Heart left ventricle (tissue), 16 donors: ENCODE measurements at regions of chr18 and their contacts with region 1.

Region 1: GRCh38 chr18:48777026-48777743 is 173.6 kb downstream of the SMAD7 start:
- DNase-seq: peak; percentile 62 to 84 (median 69)
- ATAC-seq: peak in 1 of 4 donors; percentile 15
- H3K4me3 ChIP-seq: no peak overlapping the region
- H3K27ac ChIP-seq: peak overlapping the region in 3 of 12 donors; percentile 17 to 42 (median 39)
- H3K4me1 ChIP-seq: peaks cover 16 to 89% (median 66%) of the 10 kb centered on the region in 12 donors
- H3K27me3 ChIP-seq: no peaks in the 10 kb centered on the region
- CTCF ChIP-seq: peak; percentile 78 to 96 (median 88)
- POLR2A ChIP-seq: no peak

Region 2: DNA sequence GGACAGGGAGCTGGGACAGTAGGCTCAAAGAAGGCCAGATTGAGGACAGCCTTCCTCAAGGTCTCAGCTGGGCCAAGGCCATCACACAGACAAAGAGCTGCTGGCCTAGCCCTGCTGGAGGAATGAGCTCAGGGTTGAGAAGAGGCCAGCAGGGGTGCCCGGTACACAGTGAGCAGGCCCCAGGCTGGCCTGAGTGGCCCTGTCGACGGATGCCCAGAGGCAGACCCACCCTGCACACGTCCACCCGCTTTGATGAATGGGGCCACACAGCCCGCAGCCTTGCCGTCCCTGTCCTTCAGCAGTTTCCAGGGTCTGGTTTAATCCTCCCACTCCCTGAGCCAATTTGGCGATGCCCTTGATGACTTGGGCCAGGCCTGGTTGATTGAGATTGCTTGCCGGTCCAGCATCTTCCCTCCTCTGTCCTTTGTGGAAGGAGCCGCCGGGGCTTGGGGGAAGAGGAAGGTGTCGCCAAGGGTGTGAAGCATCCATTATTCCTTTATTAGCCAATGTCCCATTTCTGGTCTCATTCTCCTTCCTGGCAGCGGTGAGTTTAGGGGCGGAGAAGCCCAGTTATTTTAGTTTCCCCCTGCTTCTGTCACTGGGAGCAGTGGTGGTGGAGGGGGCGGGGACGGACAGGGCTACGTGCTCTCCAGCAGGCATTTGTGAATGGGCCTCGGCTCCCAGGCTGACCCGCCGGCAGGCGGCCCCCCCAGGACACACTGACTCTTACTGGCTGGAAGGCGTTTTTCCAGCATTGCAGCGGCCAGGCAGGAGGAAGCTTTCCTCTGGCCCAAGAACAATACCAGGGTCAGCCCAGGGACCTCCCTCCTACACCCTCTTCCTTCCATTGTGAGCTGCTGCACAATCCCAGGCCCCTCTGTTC is 96.6 kb before region 1 on chr18:
- intact Hi-C with region 1: loop called in 7 of 10 experiments (anchors 2 to 10 kb)
- DNase-seq: peak; percentile 88 to 92 (median 91)
- ATAC-seq: peak; percentile 89 to 95 (median 90)
- H3K4me3 ChIP-seq: no peak overlapping the region
- H3K27ac ChIP-seq: peak overlapping the region; percentile 56 to 94 (median 86)
- H3K4me1 ChIP-seq: peaks cover 8 to 75% (median 58%) of the 10 kb centered on the region in 12 donors
- H3K27me3 ChIP-seq: no peaks in the 10 kb centered on the region
- CTCF ChIP-seq: peak in 8 of 12 donors; percentile 17 to 56 (median 34)
- POLR2A ChIP-seq: no peak

Region 3: GRCh38 chr18:48820483-48821250 is 43.5 kb after region 1 on chr18:
- intact Hi-C with region 1: loop called in 1 of 10 experiments (anchors 5 kb)
- DNase-seq: peak in 4 of 5 donors; percentile 16 to 59 (median 17)
- ATAC-seq: no peak
- H3K4me3 ChIP-seq: no peak overlapping the region
- H3K27ac ChIP-seq: peak overlapping the region in 1 of 12 donors; percentile 30
- H3K4me1 ChIP-seq: peaks cover 0 to 34% (median 16%) of the 10 kb centered on the region in 12 donors
- H3K27me3 ChIP-seq: no peaks in the 10 kb centered on the region
- CTCF ChIP-seq: no peak
- POLR2A ChIP-seq: no peak

Region 4: DNA sequence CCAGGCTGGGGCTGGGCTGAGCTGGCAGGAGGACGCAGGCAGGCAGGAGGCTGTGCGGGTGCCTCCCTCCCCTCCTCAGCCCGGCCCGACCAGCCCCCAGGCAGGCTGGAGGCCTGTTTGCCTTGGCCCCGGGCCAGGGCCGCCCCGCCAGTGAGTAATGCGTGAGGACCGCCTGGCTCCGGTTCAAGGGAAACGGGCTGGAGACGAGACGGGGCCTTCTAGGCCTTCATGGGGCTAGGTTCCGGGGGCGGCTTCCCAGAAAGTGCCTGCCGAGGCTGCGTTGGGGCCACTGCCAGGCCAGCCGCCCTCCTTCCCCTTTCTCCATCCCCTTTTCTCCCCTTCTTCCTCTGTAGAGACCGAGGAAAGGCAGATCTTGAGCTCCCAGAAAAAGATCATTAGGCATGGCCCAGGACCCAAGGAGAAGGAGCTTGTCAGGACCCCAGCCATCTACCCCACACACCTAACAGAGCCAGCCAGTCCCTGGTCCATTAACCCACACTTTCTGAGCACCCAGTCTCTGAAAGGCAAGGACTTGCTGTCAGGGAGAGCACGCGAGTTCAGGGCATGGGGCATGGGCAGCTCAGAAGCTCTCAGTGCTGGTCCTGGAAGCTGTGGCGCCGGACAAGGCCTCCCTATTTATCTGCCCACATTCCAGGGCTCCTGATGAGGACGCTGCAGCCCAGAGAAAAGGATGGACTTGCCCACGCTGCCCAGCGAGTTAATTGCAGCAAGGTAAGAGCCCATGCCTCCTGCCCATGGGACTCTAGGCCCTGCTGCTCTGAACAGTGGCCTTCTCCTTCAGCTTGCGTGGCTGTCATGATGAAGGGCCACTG is 125.1 kb after region 1 on chr18:
- intact Hi-C with region 1: loop called in 1 of 10 experiments (anchors 2 kb)
- DNase-seq: peak; percentile 90 to 95 (median 94)
- ATAC-seq: peak; percentile 48 to 93 (median 91)
- H3K4me3 ChIP-seq: no peak overlapping the region
- H3K27ac ChIP-seq: peak overlapping the region; percentile 19 to 91 (median 69)
- H3K4me1 ChIP-seq: peaks cover 3 to 43% (median 19%) of the 10 kb centered on the region in 12 donors
- H3K27me3 ChIP-seq: no peaks in the 10 kb centered on the region
- CTCF ChIP-seq: no peak
- POLR2A ChIP-seq: no peak

Region 5: DNA sequence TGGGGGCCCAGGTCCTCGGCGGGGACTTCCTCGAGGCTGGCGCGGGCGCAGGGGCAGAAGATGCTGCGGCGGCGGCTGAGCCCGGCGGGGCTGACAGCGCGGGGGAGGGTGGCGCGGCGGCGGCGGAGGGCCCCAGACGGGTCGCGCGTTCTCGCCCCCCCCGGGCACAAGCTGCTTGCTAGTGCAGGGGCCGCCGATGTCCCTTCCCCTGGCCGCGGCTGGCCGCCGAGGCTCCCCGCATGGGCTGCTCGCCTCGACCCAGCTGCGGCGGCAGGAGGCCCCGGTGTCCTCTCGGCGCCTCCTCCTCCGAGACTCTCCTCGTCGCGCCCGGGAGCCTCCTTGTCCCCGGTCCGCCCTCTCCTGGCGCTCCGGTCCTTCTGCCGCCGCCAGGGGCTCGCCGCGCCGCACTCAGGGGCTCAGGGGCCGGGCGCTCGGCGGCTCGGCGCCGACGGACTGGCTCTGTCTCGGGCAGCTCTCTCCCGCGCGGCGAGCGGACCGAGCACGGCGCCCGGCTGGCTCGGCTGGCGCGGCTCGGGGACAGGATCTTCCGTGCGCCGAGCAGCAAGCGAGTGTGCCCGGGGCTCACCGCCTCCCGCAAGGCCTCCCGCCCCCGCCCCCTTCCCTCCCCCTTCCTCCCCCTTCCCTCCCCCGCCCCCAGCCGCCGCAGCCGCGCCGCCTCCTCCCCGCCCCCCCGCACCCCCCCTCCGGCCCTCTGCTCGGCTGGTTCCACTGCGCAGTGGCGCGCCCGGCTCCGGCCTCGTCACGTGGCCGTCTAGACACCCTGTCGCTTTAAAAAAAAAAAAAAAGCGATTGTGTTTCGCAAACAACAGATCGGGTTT is 174.5 kb after region 1 on chr18:
- intact Hi-C with region 1: loop called in 9 of 10 experiments (anchors 1 to 5 kb)
- DNase-seq: peak; percentile 91 to 95 (median 91)
- ATAC-seq: peak; percentile 74 to 85 (median 77)
- H3K4me3 ChIP-seq: peak overlapping the region; percentile 72 to 98 (median 90)
- H3K27ac ChIP-seq: peak overlapping the region; percentile 95 to 100 (median 98)
- H3K4me1 ChIP-seq: peaks cover under 1 to 57% (median 39%) of the 10 kb centered on the region in 12 donors
- H3K27me3 ChIP-seq: peaks cover 0 to 6% (median 0%) of the 10 kb centered on the region in 9 donors
- CTCF ChIP-seq: peak in 6 of 12 donors; percentile 14 to 54 (median 32)
- POLR2A ChIP-seq: peak in 1 of 2 donors; percentile 87

Region 6: DNA sequence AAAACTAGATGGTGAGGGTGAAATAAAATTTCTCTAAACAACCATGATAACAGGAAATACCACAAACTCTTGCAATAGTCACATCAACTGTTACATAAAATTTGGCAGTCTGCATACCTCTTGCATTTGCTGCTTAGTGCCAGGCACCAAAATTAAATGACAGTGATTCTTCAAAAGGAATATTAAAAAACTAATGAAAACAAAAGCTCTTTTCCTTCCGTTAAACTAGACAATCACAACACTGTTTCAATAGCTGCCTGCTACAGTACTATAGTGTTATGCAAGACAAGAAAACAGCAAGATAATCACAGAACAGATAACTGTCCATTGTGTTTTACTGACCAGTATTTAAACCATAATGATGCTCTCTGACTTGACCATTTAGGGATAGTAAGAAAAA is 412.6 kb after region 1 on chr18:
- intact Hi-C with region 1: loop called in 1 of 10 experiments (anchors 10 kb)
- DNase-seq: no peak
- ATAC-seq: no peak
- H3K4me3 ChIP-seq: no peak overlapping the region
- H3K27ac ChIP-seq: no peak overlapping the region
- H3K4me1 ChIP-seq: peaks cover 0 to 29% (median 8%) of the 10 kb centered on the region in 12 donors
- H3K27me3 ChIP-seq: no peaks in the 10 kb centered on the region
- CTCF ChIP-seq: no peak
- POLR2A ChIP-seq: no peak